ENCODE measurements at regions of chr9 and their contacts with region 1.

Region 1: DNA sequence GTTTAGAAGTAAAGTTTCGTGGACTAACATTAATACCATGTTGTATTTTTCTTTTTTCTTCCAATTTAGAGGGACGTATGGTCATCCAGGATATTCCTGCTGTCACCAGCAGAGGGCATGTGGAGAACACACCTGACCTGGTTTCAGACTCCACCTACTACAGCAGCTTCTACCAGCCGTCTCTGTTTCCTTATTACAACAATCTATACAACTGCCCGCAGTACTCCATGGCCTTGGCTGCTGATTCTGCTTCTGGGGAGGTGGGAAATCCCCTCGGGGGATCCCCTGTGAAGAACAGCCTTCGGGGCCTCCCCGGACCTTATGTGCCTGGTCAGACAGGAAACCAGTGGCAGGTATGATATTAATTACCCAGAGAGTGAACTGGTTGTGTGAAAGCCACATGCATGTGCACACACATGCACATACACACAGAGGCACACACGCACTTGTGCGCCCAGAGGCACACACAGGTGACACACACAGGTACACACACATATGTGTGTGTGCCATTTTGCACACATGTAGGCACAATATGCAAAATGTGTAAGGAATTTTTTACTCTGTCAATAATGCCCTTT is 52.4 kb downstream of the DMRT1 start:
- DNase-seq: peak in 8 of 9 experiments; percentile 10 to 73 (median 25)
- ATAC-seq: peak; percentile 84
- H3K4me3 ChIP-seq: no peak overlapping the region
- H3K4me3 Mint-ChIP-seq: peak overlapping the region; percentile 17
- H3K27ac ChIP-seq: no peak overlapping the region
- H3K27ac Mint-ChIP-seq: no peak overlapping the region
- H3K4me1 ChIP-seq: peaks cover 4% of the 10 kb centered on the region
- H3K4me1 Mint-ChIP-seq: peaks cover 9% of the 10 kb centered on the region
- H3K27me3 ChIP-seq: no peaks in the 10 kb centered on the region
- H3K27me3 Mint-ChIP-seq: peaks cover 1% of the 10 kb centered on the region
- CTCF ChIP-seq: peak; percentile 61

Region 2: DNA sequence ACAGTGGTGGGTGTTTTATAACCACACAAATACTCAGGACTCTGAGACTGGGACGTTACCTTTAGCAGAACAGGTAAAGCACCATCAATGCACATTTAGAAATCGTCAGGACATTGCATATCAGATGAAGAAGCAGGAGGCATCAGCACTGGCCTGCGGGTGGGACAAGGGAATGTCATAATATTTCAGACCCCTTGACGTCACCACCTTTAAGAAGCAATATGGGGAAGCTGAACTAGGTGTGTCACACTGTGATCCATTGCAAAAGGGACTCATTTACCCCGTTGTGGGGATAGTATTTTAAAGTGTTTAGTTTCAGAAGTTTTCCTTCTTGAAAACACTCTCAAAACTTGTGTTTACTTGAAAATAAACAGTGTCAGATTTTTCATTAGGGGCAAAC is 27.7 kb before region 1 on chr9:
- CTCF ChIA-PET with region 1: no interaction called
- POLR2A ChIA-PET with region 1: no interaction called
- intact Hi-C with region 1: loop called in 1 of 2 experiments (anchors 1 kb)
- DNase-seq: no peak
- ATAC-seq: no peak
- H3K4me3 ChIP-seq: no peak overlapping the region
- H3K4me3 Mint-ChIP-seq: no peak overlapping the region
- H3K27ac ChIP-seq: no peak overlapping the region
- H3K27ac Mint-ChIP-seq: no peak overlapping the region
- H3K4me1 ChIP-seq: no peaks in the 10 kb centered on the region
- H3K4me1 Mint-ChIP-seq: no peaks in the 10 kb centered on the region
- H3K27me3 ChIP-seq: peaks cover 0 to 4% of the 10 kb centered on the region in 2 experiments
- H3K27me3 Mint-ChIP-seq: peaks cover 3% of the 10 kb centered on the region
- CTCF ChIP-seq: no peak

Region 3: GRCh38 chr9:1009101-1009707 is 115.3 kb after region 1 on chr9:
- CTCF ChIA-PET with region 1: interaction called, 4 read pairs
- POLR2A ChIA-PET with region 1: no interaction called
- intact Hi-C with region 1: loop called in 1 of 2 experiments (anchors 1 kb)
- DNase-seq: peak; percentile 49 to 74 (median 65)
- ATAC-seq: peak; percentile 74
- H3K4me3 ChIP-seq: no peak overlapping the region
- H3K4me3 Mint-ChIP-seq: no peak overlapping the region
- H3K27ac ChIP-seq: no peak overlapping the region
- H3K27ac Mint-ChIP-seq: no peak overlapping the region
- H3K4me1 ChIP-seq: no peaks in the 10 kb centered on the region
- H3K4me1 Mint-ChIP-seq: no peaks in the 10 kb centered on the region
- H3K27me3 ChIP-seq: peaks cover 0 to 2% of the 10 kb centered on the region in 2 experiments
- H3K27me3 Mint-ChIP-seq: peaks cover 37% of the 10 kb centered on the region
- CTCF ChIP-seq: peak; percentile 78

Region 4: DNA sequence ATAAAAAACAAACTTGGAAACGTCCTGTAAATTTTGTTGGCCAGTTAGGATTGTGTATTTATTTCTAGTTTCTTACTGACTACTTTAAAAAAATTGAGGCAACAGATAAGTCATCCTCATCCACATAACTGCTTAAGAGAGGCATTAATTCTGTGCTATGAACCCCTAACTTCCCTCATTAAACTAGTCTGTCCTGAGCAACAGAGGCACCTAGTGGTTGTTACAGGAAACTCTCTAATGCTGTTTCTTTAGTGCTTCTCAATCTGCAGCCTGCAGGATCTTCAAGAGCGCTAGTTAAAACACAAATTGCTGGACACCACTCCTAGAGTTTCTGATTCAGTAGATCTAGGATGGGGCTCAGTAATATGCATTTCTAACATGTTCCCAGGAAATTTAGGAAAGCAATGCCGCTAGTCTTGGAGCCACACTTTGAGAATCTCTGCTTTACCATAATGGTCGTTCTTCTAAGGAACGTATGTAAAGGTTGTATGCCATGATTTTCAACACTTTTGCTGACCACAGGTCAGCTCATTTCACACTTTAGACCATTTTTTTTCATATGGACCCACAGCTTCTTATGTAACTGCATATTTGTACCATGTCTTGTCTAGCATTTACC is 711.1 kb after region 1 on chr9:
- CTCF ChIA-PET with region 1: no interaction called
- POLR2A ChIA-PET with region 1: no interaction called
- intact Hi-C with region 1: loop called in 1 of 2 experiments (anchors 10 kb)
- DNase-seq: peak in 1 of 9 experiments; percentile 2
- ATAC-seq: no peak
- H3K4me3 ChIP-seq: no peak overlapping the region
- H3K4me3 Mint-ChIP-seq: no peak overlapping the region
- H3K27ac ChIP-seq: no peak overlapping the region
- H3K27ac Mint-ChIP-seq: no peak overlapping the region
- H3K4me1 ChIP-seq: no peaks in the 10 kb centered on the region
- H3K4me1 Mint-ChIP-seq: no peaks in the 10 kb centered on the region
- H3K27me3 ChIP-seq: no peaks in the 10 kb centered on the region
- H3K27me3 Mint-ChIP-seq: no peaks in the 10 kb centered on the region
- CTCF ChIP-seq: no peak